AG04449 (cell line): ENCODE measurements at regions of chr6 and their contacts with region 1.

Region 1: GRCh38 chr6:112043032-112044007 is 10.6 kb upstream of the CCN6 start:
- DNase-seq: peak; percentile 33
- H3K4me3 ChIP-seq: peak overlapping the region; percentile 62
- CTCF ChIP-seq: peak; percentile 95

Region 2: GRCh38 chr6:111552241-111552744 is 491.0 kb before region 1 on chr6:
- CTCF ChIA-PET with region 1: no interaction called
- POLR2A ChIA-PET with region 1: no interaction called
- DNase-seq: peak; percentile 92
- H3K4me3 ChIP-seq: no peak overlapping the region
- CTCF ChIP-seq: no peak

Region 3: GRCh38 chr6:111692327-111693164 is 350.8 kb before region 1 on chr6:
- CTCF ChIA-PET with region 1: interaction called, 34 read pairs
- POLR2A ChIA-PET with region 1: no interaction called
- DNase-seq: no peak
- H3K4me3 ChIP-seq: no peak overlapping the region
- CTCF ChIP-seq: no peak

Region 4: DNA sequence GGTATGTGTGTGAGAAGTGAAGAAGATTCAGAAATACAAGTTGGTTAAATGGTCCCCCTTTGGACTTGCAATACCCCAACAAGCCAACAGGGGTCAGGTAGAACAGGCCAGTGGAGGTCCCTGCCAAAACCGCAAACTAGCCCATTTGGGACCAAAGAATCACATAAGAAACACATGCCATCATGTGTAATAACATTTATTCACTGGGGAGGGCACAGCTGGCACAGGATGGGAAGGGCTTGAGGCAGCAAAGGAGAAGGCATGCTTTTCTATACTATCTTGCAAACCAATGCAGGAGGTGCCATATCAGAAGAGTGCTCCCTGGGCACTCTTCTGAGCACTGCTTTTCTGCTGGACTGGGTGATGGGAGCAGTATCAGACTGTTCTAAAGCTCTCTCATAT is 321.6 kb before region 1 on chr6:
- CTCF ChIA-PET with region 1: interaction called, 87 read pairs
- POLR2A ChIA-PET with region 1: interaction called, 3 read pairs
- DNase-seq: no peak
- H3K4me3 ChIP-seq: no peak overlapping the region
- CTCF ChIP-seq: peak; percentile 55

Region 5: DNA sequence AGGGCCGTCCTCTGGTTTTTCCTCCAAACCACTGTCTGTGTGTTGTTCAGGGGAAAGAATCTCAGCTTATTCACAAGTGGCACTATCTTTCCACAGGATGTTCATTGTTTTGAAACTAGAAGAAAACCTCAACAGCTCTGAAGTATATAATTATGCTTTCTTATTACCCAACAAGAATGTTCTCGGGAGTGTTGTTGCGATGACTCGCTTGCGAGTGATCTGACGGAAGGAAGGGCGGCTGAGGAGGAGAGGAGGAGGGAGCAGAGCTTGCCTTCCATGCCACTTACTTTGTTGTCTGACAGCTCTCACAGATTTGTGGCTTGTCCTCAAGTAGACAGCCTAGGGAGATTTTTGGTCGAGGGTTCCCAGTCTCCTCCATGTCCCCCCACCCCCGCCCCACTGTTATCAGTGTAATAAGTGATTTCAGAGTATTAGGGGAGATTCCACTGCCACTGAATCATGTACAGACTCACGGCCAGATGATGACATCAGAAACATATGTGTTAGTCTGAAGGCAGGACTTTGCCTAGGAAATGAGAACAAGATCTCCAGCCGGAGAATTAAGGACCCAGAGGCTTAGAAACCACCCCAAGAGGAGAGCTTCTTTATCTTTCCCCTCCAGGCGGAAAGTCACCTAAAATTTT is 70.1 kb before region 1 on chr6:
- CTCF ChIA-PET with region 1: interaction called, 18 read pairs
- POLR2A ChIA-PET with region 1: no interaction called
- DNase-seq: peak; percentile 92
- H3K4me3 ChIP-seq: peak overlapping the region; percentile 36
- CTCF ChIP-seq: no peak

Region 6: GRCh38 chr6:112010328-112010727 is 33.0 kb before region 1 on chr6:
- CTCF ChIA-PET with region 1: interaction called, 50 read pairs
- POLR2A ChIA-PET with region 1: no interaction called
- DNase-seq: no peak
- H3K4me3 ChIP-seq: no peak overlapping the region
- CTCF ChIP-seq: no peak

Region 7: DNA sequence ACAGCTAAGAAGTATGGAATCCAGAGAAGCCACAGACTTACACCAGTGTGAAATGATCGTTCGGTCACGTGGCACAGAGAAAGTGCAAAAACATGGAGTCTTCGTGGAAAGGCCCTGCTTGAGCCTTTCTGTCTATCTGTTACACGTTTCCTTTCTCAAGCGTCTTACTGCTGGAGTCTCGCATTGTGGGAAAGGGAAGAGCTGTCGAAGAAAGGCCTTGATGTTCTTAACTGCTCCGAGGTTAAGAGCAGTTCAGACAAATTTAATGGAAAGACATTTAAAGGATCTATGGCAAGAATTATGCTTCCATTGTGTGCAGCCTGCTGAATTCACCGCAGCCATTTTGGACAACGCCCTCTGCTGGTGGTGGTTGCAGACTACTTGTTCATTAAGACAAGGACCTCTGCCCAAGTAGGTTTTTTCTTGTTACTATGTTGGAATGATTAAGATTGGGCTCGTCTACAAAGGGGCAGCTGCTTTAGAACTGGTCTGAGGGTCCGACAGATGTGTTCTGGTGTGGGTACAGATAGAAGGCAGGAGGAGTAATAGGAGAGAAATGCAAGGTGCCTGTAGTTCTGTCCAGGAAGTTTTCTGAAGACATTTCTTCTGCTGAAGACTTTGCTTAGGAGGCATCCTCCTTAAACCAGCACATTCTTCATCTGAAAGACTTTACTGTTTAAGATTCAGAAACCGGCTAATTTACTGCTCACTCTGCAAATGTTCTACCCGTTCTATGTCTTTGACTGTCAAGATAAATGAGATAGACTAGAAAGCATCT is 14.1 kb before region 1 on chr6:
- CTCF ChIA-PET with region 1: interaction called, 79 read pairs
- POLR2A ChIA-PET with region 1: no interaction called
- DNase-seq: no peak
- H3K4me3 ChIP-seq: no peak overlapping the region
- CTCF ChIP-seq: peak; percentile 61

Region 8: GRCh38 chr6:112163295-112164257 is 120.3 kb after region 1 on chr6:
- CTCF ChIA-PET with region 1: interaction called, 26 read pairs
- POLR2A ChIA-PET with region 1: no interaction called
- DNase-seq: no peak
- H3K4me3 ChIP-seq: no peak overlapping the region
- CTCF ChIP-seq: peak; percentile 94